ENCODE measurements at regions of chrX and their contacts with region 1.

Region 1: GRCh38 chrX:8743126-8743732 is 11.3 kb upstream of the ANOS1 start:
- DNase-seq: peak; percentile 46
- H3K4me3 ChIP-seq: no peak overlapping the region
- H3K27ac ChIP-seq: no peak overlapping the region
- H3K4me1 ChIP-seq: no peaks in the 10 kb centered on the region
- H3K27me3 ChIP-seq: no peaks in the 10 kb centered on the region

Region 2: DNA sequence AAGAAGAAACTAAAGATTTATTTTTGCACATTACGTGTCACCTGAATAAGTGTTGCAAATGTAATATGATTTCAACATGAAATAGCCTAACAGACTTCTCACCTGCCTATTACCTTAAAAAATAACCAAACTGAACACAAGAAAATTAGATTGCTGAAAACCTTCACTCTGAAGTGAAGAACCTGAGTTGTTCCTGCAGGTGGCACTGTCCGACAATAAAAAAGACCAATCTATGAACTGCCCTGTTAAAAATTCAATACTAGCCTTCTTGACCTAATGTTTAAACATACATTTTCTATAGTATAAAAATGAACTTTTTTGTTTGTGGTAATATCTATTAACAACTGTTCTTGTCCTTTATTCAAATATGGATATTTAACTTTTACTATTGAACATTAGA is 746.8 kb before region 1 on chrX:
- in situ Hi-C with region 1: loop called (anchors 25 kb)
- DNase-seq: peak; percentile 47
- H3K4me3 ChIP-seq: no peak overlapping the region
- H3K27ac ChIP-seq: no peak overlapping the region
- H3K4me1 ChIP-seq: no peaks in the 10 kb centered on the region
- H3K27me3 ChIP-seq: no peaks in the 10 kb centered on the region

Region 3: GRCh38 chrX:8815464-8816065 is 72.3 kb after region 1 on chrX:
- in situ Hi-C with region 1: loop called (anchors 10 kb)
- DNase-seq: peak; percentile 34
- H3K4me3 ChIP-seq: no peak overlapping the region
- H3K27ac ChIP-seq: no peak overlapping the region
- H3K4me1 ChIP-seq: no peaks in the 10 kb centered on the region
- H3K27me3 ChIP-seq: no peaks in the 10 kb centered on the region

Region 4: GRCh38 chrX:9055354-9055753 is 312.1 kb after region 1 on chrX:
- in situ Hi-C with region 1: no loop called
- DNase-seq: no peak
- H3K4me3 ChIP-seq: no peak overlapping the region
- H3K27ac ChIP-seq: no peak overlapping the region
- H3K4me1 ChIP-seq: no peaks in the 10 kb centered on the region
- H3K27me3 ChIP-seq: no peaks in the 10 kb centered on the region

Region 5: DNA sequence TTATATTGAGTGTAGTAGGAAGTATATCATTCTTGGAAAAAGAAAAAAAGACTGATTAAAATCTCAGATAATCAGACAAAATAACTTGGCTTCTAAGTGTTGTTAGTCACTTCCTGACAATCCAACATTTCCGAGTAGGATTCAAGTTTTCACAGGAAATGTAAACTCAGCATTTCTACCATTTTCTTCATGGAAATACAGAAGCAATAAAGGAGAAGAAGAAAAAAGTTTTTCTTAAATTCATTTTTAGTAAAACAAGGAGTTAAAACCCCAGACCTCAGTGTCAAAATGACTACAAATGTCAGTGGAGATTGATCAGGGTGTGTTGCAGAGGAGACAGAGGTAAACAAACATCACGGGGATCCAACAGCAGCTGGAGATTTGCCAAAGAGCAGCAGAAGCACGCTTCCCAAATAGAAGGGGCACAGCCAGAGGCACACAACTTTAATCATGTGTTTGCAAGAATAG is 420.0 kb after region 1 on chrX:
- in situ Hi-C with region 1: no loop called
- DNase-seq: peak; percentile 42
- H3K4me3 ChIP-seq: no peak overlapping the region
- H3K27ac ChIP-seq: no peak overlapping the region
- H3K4me1 ChIP-seq: peaks cover 17% of the 10 kb centered on the region
- H3K27me3 ChIP-seq: no peaks in the 10 kb centered on the region

Measured in GM23248 (cell line).